ENCODE measurements at regions of chr20 and their contacts with region 1.

Region 1: DNA sequence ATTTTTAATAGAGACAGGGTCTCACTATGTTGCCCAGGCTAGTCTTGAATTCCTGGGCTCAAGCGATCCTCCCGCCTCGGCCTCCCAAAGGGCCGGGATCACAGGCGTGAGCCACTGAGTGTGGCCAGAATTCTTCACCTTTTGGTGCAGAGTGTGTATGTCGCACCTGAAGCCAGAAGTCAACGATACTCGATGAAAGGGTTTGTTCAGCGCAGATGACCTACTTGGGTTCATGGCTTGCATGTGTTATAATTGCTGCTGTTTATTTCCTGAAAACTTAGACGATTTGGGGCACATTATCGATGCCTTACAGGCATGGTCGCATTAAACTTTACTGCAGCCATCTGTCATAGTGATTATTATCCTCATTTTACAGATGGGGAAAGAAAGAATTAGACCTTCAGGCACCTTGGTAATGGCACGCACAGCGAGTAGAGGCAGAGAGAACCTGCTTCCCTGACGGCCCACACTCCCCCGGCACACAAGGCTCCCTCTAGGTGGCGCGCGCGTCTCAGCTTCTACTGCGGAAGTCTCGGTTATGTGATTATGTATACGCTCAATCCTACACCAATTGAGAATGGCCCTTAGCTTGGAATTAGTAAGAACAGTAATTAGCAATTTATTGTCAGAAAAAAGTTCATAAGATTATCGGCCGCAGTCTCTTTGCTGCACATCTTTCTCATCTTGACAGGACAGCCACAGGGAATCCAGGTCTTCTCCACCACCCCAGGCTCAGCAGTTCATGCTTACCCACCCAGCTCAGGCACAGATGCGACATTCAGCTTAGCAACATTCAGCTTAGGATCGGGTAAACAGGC is 212.8 kb upstream of the PROKR2 start:
- DNase-seq: peak; percentile 95
- H3K4me3 Mint-ChIP-seq: peak overlapping the region; percentile 60
- H3K27ac Mint-ChIP-seq: peak overlapping the region; percentile 80
- H3K4me1 Mint-ChIP-seq: peaks cover 21% of the 10 kb centered on the region
- H3K27me3 Mint-ChIP-seq: no peaks in the 10 kb centered on the region

Region 2: DNA sequence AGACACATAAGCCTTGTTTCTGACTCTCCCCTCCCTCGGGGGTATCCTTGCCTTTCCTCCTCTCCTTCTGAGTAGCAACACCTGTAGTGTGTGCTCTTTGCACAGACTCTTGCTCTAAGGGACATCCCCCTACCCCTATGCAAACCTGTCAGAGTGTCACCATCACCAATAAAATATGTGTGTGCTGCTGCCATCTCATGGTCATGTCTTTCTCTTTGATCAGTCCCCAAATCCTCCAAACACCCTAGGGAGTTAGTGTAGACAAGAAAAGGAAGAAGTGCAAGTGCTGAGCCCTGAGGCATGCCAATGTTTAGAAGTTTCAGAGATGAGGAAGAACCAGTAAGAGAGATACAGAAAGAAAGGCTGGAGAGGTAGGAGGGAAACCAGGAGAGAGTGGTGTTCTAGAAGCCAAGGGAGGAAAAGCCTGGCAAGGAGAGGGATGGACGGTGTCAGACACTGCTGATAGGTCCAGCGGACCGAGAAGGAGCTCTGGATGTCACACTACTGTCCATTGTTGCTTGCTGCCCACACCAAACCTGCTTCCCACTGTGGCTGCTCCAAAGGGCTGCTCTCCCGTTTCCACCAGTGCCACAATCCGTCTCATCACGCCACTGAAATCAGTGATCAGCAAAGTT is 404.4 kb after region 1 on chr20:
- intact Hi-C with region 1: loop called (anchors 1 kb)
- DNase-seq: no peak
- H3K4me3 Mint-ChIP-seq: no peak overlapping the region
- H3K27ac Mint-ChIP-seq: no peak overlapping the region
- H3K4me1 Mint-ChIP-seq: peaks cover 4% of the 10 kb centered on the region
- H3K27me3 Mint-ChIP-seq: peaks cover 6% of the 10 kb centered on the region

Region 3: DNA sequence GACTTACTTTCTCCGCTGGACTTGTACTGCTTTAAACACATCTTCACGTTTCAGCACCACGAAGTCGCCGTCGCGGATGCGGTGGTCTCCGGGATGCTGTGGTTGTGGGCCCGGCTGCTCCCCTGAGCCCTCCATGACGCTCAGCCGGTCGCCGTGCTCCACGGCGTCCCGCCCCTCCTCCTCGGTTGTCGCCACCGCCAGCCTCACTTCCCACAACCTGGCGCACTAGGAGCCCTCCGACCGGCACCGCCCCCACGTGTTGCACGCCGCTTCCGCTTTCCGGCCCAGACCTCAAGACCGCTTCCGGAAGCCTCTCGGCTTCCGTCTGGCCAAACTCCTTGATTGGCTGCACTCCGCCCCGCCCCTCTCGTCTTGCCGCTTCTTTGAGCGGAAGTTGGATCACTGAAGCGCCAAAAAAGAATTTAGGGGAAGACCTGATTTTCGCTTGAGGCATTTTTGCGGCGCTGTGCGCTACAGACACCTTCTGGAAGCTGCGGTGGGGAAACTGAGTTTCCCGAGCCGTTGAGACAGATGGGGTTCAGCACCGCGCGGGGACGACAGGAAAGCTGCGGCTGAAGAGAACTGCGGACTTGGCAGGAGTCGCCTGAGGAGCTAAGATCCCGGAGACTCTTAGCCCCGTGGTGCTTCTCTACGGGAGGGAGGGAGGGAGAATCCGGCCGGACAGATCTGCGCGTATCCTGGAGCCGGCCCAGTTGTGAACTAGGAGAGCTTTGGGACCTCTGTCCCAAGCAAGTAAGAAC is 420.9 kb after region 1 on chr20 and contains the starts of genes MCM8 and TRMT6:
- intact Hi-C with region 1: loop called (anchors 1 kb)
- DNase-seq: peak; percentile 99
- H3K4me3 Mint-ChIP-seq: peak within 1 kb of the TSS; percentile 99
- H3K27ac Mint-ChIP-seq: peak within 1 kb of the TSS; percentile 98
- H3K4me1 Mint-ChIP-seq: peaks cover 46% of the 10 kb centered on the region
- H3K27me3 Mint-ChIP-seq: peaks cover 2% of the 10 kb centered on the region
- total RNA-seq, gene MCM8: 41.0 and 42.2 TPM in 2 replicates
- total RNA-seq, gene TRMT6: 33.6 and 35.5 TPM in 2 replicates

Region 4: GRCh38 chr20:5996765-5997164 is 467.2 kb after region 1 on chr20:
- intact Hi-C with region 1: loop called (anchors 2 kb)
- DNase-seq: peak; percentile 90
- H3K4me3 Mint-ChIP-seq: peak overlapping the region; percentile 18
- H3K27ac Mint-ChIP-seq: peak overlapping the region; percentile 51
- H3K4me1 Mint-ChIP-seq: peaks cover 15% of the 10 kb centered on the region
- H3K27me3 Mint-ChIP-seq: no peaks in the 10 kb centered on the region

Region 5: DNA sequence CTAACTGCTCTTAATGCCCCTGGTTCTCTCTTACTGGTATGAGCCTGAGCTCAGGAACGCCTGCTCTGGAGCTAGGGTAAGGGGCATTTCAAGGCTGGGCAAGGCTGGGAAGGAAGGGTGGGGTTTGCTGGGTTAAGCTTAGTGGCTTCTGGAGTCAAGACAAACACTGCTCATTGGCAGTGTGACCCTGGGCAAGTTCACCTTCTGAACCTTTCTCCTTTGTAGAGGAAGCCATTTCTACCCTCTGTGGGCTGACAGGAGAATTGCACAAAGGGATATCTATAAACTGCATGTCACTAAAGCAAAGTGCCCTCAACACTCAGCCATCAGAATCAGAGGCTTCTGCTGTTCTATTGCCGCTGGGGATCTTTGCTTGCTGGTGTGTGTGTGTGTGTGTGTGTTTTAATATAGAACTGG is 544.6 kb after region 1 on chr20:
- intact Hi-C with region 1: loop called (anchors 1 kb)
- DNase-seq: peak; percentile 65
- H3K4me3 Mint-ChIP-seq: no peak overlapping the region
- H3K27ac Mint-ChIP-seq: no peak overlapping the region
- H3K4me1 Mint-ChIP-seq: no peaks in the 10 kb centered on the region
- H3K27me3 Mint-ChIP-seq: peaks cover 4% of the 10 kb centered on the region